Activated CD4-positive, alpha-beta T cell treated with anti-CD3 and anti-CD28 coated beads for 36 hours (primary cell): ENCODE measurements at regions of chr19 and their contacts with region 1.

Region 1: GRCh38 chr19:42283143-42284065 is 14.4 kb downstream of the CIC start:
- DNase-seq: peak; percentile 98
- ATAC-seq: peak; percentile 62
- H3K4me3 Mint-ChIP-seq: no peak overlapping the region
- H3K27ac Mint-ChIP-seq: no peak overlapping the region
- H3K4me1 Mint-ChIP-seq: peaks cover 41% of the 10 kb centered on the region
- H3K27me3 Mint-ChIP-seq: no peaks in the 10 kb centered on the region

Region 2: GRCh38 chr19:41883821-41884733 is 399.3 kb before region 1 on chr19:
- CTCF ChIA-PET with region 1: no interaction called
- POLR2A ChIA-PET with region 1: no interaction called
- intact Hi-C with region 1: loop called in 1 of 2 experiments (anchors 5 kb)
- DNase-seq: peak; percentile 94
- ATAC-seq: peak; percentile 75
- H3K4me3 Mint-ChIP-seq: peak overlapping the region; percentile 68
- H3K27ac Mint-ChIP-seq: peak overlapping the region; percentile 96
- H3K4me1 Mint-ChIP-seq: peaks cover 54% of the 10 kb centered on the region
- H3K27me3 Mint-ChIP-seq: no peaks in the 10 kb centered on the region

Region 3: GRCh38 chr19:42121656-42122069 is 161.7 kb before region 1 on chr19:
- CTCF ChIA-PET with region 1: no interaction called
- POLR2A ChIA-PET with region 1: interaction called, 3 read pairs
- intact Hi-C with region 1: loop called in 1 of 2 experiments (anchors 1 kb)
- DNase-seq: peak; percentile 93
- ATAC-seq: peak; percentile 81
- H3K4me3 Mint-ChIP-seq: peak overlapping the region; percentile 80
- H3K27ac Mint-ChIP-seq: peak overlapping the region; percentile 94
- H3K4me1 Mint-ChIP-seq: peaks cover 57% of the 10 kb centered on the region
- H3K27me3 Mint-ChIP-seq: no peaks in the 10 kb centered on the region

Region 4: DNA sequence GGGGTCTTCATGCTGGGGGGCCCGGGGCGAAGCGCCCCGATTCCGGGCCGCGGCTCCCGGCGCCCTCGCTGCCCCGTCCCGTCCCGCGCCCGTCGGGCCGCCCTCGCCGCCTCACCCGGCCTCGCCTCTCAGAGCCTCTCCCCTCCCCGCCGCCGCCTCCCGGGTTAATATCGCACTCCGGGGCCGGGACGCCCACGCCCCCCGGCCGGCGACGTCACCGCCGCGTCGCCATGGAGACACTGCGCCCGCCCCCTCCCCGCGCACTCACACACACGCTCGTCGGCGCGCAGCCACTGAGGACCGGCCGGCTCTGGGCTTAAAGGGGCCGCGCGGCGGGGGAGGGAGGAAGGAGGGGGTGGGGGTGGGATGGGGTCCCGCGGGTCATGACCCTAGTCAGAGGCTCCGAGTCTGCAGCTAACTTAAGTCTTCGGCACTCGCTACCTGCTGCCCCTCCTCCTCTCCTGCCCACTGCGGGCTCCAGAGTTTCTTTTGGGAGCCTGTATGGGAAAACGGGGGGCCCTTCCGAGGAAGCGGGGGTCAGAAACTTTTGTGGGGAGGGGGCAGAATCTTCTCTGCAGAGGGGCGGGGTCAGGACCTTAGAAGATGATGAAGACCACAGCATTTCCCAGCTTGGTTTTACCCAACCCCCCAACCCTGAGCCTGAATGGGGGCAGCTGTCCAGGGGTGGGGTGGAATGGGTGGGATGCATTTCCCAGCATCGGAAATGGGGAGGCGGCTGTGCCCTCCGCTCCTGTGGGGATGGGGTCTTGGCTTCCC is 28.2 kb before region 1 on chr19 and contains the start of gene ERF:
- CTCF ChIA-PET with region 1: interaction called, 5 read pairs
- POLR2A ChIA-PET with region 1: interaction called, 3 read pairs
- intact Hi-C with region 1: loop called (anchors 1 kb)
- DNase-seq: peak; percentile 97
- ATAC-seq: peak; percentile 73
- H3K4me3 Mint-ChIP-seq: peak within 1 kb of the TSS; percentile 70
- H3K27ac Mint-ChIP-seq: peak within 1 kb of the TSS; percentile 63
- H3K4me1 Mint-ChIP-seq: peaks cover 25% of the 10 kb centered on the region
- H3K27me3 Mint-ChIP-seq: peaks cover 3% of the 10 kb centered on the region
- total RNA-seq, gene ERF: 65.5 to 66.4 TPM

Region 5: GRCh38 chr19:42301656-42302203 is 18.3 kb after region 1 on chr19 and contains the start of gene PRR19:
- CTCF ChIA-PET with region 1: interaction called, 6 read pairs
- POLR2A ChIA-PET with region 1: interaction called, 4 read pairs
- intact Hi-C with region 1: loop called in 1 of 2 experiments (anchors 1 kb)
- DNase-seq: peak; percentile 50
- ATAC-seq: peak; percentile 25
- H3K4me3 Mint-ChIP-seq: peak within 1 kb of the TSS; percentile 83
- H3K27ac Mint-ChIP-seq: peak within 1 kb of the TSS; percentile 85
- H3K4me1 Mint-ChIP-seq: peaks cover 19% of the 10 kb centered on the region
- H3K27me3 Mint-ChIP-seq: no peaks in the 10 kb centered on the region
- total RNA-seq, gene PRR19: 0.63 to 1.0 TPM

Region 6: DNA sequence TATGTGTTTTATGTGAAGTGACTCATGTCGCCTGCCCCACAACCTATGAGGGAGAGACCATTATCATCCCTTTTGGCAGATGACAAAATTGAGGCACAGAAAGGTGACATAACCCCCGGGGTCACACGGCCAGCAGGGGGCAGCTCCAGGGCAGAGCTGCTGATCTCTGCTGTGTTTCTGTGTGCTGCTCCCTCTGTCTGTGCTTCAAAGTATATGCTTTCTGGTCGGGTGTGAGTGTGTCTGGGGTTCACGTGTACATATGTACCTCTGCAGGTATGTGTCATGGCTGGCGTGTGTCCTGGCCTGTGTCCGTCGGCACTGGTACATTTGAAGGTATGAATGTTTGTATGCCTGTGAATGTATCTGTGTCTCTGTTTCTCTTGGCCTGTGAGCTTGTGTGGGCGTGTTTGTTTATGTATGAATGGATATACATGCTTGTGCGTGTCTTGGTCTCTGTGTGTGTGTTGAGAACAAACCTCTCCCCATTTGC is 136.7 kb after region 1 on chr19:
- CTCF ChIA-PET with region 1: no interaction called
- POLR2A ChIA-PET with region 1: no interaction called
- intact Hi-C with region 1: no loop called
- DNase-seq: peak; percentile 91
- ATAC-seq: peak; percentile 57
- H3K4me3 Mint-ChIP-seq: no peak overlapping the region
- H3K27ac Mint-ChIP-seq: no peak overlapping the region
- H3K4me1 Mint-ChIP-seq: peaks cover 40% of the 10 kb centered on the region
- H3K27me3 Mint-ChIP-seq: no peaks in the 10 kb centered on the region